Spleen (tissue), 13 donors: ENCODE measurements at regions of chr5 and their contacts with region 1.

Region 1: DNA sequence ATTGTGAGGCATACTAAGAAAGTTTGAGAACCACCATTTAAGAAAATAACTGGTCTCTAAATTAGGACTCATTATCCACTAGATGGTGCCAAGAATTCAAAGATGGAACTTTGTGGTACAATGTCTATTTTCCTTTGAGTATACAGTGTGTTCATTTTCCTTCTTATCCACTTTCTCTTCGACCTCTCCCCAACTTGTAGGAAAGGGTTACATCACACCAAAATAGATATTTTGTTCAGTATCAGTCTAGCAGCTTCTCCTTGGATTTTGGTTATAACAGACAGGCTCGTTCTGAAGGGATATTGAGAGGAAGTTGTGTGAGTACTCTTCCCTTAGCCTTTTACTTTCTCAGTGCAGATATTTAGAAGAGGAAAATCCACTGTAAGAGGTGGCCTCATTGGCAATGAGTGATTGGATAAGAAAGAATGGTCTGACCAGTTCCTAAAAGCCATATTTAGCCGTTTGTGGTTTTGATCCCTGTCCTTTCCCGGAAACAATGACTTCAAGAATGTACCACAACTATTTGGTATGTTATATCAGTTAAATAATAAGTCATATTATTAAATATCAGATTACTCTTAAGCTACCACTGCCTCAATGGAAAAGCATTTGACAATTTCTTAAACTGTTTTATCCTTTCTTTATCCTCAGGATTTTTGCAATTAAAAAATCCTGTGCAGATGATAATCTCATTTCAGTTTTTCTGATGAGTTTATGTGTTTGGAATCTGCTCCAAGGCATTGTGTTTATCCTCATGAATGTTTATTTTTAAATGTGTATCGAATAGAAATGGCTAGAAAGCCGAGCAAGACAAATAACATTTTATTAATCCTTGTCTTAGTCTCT is 69.0 kb upstream of the GRAMD2B start:
- DNase-seq: no peak
- H3K4me3 ChIP-seq: peak overlapping the region in 1 of 8 donors; percentile 41
- H3K27ac ChIP-seq: peak overlapping the region in 5 of 8 donors; percentile 29 to 53 (median 29)
- H3K4me1 ChIP-seq: peaks cover 0 to 9% (median 6%) of the 10 kb centered on the region in 6 donors
- H3K27me3 ChIP-seq: no peaks in the 10 kb centered on the region
- CTCF ChIP-seq: peak in 9 of 11 experiments; percentile 24 to 67 (median 43)
- POLR2A ChIP-seq: no peak

Region 2: DNA sequence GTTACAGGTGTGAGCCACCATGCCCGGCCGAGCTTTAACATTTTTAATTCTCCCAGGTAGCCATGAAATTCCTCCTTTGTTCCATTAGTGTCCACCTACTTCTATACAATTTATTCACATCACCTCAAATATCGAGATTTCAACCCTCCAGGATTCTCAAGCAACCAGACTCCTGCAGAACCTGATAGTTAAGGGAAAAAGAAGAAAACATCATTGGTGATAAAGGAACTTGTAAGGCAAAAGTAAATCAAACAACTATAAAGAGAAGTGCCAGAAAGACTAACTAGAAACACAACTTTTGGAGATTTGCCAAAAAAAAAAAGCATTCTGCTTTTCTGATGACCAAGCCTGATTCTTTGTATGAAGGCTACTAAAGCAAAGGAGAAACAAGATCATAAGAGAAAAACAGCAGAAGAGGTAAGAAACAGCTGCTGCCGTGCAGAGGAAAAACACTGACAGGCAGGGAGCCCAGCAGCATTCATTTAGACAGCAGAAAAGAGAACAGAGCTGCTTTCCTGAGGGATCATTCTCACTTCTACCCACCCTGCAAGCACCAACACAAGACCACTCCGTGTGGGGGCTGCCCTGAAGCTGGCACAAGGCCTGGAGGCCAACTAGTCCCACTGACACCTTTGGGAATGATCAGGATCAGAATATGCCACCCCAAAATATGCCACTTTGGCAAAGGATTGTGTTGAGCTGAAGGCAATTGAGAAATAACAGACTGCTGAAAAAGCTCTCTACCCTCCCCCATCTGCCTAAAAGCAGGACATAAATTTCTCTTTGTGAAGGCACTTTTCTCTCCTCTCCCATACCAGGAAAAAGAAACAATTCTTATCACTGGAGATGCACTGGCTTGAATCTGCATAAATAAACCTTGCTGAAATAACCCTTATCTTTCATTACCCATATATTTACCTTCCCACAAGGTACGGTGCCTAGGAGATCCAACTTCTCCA is 165.7 kb after region 1 on chr5:
- intact Hi-C with region 1: no loop called
- DNase-seq: no peak
- H3K4me3 ChIP-seq: no peak overlapping the region
- H3K27ac ChIP-seq: peak overlapping the region in 6 of 8 donors; percentile 22 to 70 (median 60)
- H3K4me1 ChIP-seq: peaks cover 0 to 26% (median 2%) of the 10 kb centered on the region in 6 donors
- H3K27me3 ChIP-seq: no peaks in the 10 kb centered on the region
- CTCF ChIP-seq: no peak
- POLR2A ChIP-seq: no peak

Region 3: GRCh38 chr5:126536874-126537273 is 182.6 kb after region 1 on chr5:
- intact Hi-C with region 1: loop called (anchors 5 kb)
- DNase-seq: no peak
- H3K4me3 ChIP-seq: no peak overlapping the region
- H3K27ac ChIP-seq: no peak overlapping the region
- H3K4me1 ChIP-seq: peaks cover 0 to 7% (median 2%) of the 10 kb centered on the region in 6 donors
- H3K27me3 ChIP-seq: no peaks in the 10 kb centered on the region
- CTCF ChIP-seq: no peak
- POLR2A ChIP-seq: no peak